K562 (cell line): ENCODE measurements at regions of chr6 and their contacts with region 1.

Region 1: DNA sequence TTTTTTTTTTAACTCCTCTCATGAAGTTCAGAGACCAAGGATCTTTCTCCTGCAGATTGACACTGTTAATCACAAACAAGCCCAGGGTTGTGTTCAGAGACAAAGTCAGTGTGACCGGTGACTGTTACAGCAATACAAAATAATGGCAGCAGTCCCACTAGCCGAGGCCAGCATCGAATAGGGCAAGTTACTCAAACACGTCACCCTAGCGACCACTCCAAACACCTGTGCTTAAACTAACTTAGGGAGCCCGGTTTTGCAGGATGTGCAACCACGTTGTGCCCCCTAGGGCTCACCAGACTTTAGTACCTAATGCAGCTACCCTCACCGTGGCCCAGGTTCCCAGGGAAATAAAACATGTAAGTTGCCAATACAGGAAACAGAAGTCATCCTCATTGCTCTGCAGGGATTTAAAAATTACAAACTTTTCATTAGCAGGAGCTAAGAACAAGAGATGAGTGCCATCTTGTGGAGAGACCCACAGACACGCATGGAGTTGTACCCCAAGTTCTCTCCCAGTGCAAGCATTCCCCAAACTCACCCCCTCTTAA is 38.1 kb downstream of the FAM50B start:
- DNase-seq: no peak
- ATAC-seq: no peak
- H3K4me3 ChIP-seq: no peak overlapping the region
- H3K27ac ChIP-seq: no peak overlapping the region
- H3K4me1 ChIP-seq: no peaks in the 10 kb centered on the region
- H3K27me3 ChIP-seq: peaks cover 17 to 46% of the 10 kb centered on the region in 2 experiments
- CTCF ChIP-seq: peak; percentile 10 to 36 (median 23); a peak in 1 of 6 replicates
- EP300 ChIP-seq: no peak
- POLR2A ChIP-seq: no peak
- RAD21 ChIP-seq: peak in 1 of 2 experiments; percentile 28; a peak in 2 of 4 replicates

Region 2: DNA sequence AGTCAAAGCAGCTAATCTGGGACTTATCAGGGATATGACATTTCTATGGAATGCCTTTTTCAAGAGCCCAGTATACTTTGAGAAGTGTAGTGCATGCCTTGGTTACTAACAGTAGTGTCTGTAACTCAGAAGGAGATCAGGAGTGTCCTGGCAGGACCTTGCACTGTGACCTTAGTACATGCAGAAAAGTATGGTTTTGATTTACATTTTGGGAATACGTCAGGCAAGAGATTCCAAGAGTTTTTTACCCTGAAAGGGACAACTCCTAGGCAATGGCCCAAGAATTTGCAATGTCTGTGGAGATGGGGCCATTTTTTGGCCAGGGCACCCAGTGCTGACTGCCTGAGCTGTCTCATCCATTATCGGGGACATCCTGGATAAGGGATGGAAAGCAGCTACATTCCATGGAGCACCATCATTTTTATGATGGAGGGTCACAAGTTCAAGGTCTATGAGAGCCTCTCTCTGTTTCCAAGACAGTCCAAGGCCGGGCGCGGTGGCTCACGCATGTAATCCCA is 42.1 kb after region 1 on chr6:
- CTCF ChIA-PET with region 1: no interaction called
- POLR2A ChIA-PET with region 1: no interaction called
- in situ Hi-C with region 1: no loop called
- intact Hi-C with region 1: loop called (anchors 2 kb)
- DNase-seq: no peak
- ATAC-seq: no peak
- H3K4me3 ChIP-seq: no peak overlapping the region
- H3K27ac ChIP-seq: no peak overlapping the region
- H3K4me1 ChIP-seq: peaks cover 0 to 1% of the 10 kb centered on the region in 2 experiments; a peak in 1 of 5 replicates
- H3K27me3 ChIP-seq: peaks cover 2 to 7% of the 10 kb centered on the region in 2 experiments; a peak in 4 of 5 replicates
- CTCF ChIP-seq: no peak
- EP300 ChIP-seq: no peak
- POLR2A ChIP-seq: no peak
- RAD21 ChIP-seq: no peak

Region 3: DNA sequence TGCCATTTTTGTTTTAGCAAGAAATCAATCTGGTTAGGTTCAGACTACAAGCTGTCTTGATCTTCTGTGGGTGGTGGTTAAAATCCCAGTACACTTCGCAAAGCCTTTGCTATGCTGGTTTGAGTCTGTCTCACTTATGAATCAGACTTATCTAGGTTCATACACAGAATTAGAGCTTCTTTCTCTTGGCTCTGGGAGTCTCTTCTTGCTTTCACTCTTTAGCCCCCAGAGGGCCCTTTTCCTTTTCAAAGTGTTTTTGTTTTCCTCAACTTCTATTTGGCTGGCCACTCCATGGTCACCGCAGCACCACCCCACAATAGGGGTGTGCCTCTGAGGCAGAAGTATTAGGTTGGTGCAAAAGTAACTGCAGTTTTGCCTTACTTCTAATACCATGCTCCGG is 226.9 kb after region 1 on chr6:
- CTCF ChIA-PET with region 1: no interaction called
- POLR2A ChIA-PET with region 1: no interaction called
- in situ Hi-C with region 1: no loop called
- intact Hi-C with region 1: no loop called
- DNase-seq: no peak
- ATAC-seq: peak; percentile 50
- H3K4me3 ChIP-seq: no peak overlapping the region
- H3K27ac ChIP-seq: no peak overlapping the region
- H3K4me1 ChIP-seq: no peaks in the 10 kb centered on the region
- H3K27me3 ChIP-seq: no peaks in the 10 kb centered on the region
- CTCF ChIP-seq: no peak
- EP300 ChIP-seq: no peak
- POLR2A ChIP-seq: no peak
- RAD21 ChIP-seq: no peak